ENCODE measurements at regions of chr2 and their contacts with region 1.

Region 1: DNA sequence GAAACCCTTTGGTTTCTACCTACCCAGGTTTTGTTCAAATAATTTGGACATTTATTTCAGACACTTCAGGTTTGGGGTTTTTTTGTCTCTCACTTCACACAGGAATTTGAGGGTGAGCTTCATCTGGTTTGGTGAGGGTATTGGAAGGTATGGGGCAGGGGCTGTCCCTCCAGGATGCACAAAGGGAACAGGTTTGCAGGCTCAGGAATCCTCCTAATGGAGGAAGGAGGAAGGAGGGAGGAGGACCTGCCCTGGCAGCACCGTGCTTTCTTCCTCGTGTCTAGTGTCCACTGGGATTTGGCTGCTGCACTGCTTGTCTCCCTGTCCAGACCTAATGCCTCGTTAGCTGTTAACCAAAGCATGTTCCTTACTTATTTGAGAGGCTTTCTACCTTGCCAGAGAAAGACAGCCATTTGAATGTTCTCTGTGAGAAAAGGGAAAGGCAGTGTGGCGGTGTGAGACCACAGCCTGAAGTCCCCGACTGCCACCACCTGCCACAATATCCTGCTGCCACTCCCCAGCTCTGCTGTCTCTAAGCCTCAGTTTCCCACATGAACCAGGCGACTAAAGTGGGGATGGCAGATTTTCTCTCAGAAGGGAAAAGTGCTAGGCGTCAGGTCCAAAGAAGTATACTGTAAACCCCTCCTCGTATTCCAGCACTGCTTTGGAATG is 2.2 kb upstream of the SLC4A5 start:
- DNase-seq: no peak
- ATAC-seq: 0 out of 2 replicates have a peak, but pooled peaks have one; percentile 48
- H3K4me3 ChIP-seq: no peak overlapping the region
- H3K27ac ChIP-seq: no peak overlapping the region
- H3K4me1 ChIP-seq: no peaks in the 10 kb centered on the region
- H3K27me3 ChIP-seq: no peaks in the 10 kb centered on the region
- CTCF ChIP-seq: no peak

Region 2: GRCh38 chr2:74206180-74206688 is 139.2 kb before region 1 on chr2:
- CTCF ChIA-PET with region 1: no interaction called
- POLR2A ChIA-PET with region 1: no interaction called
- in situ Hi-C with region 1: no loop called
- intact Hi-C with region 1: no loop called
- DNase-seq: no peak
- ATAC-seq: no peak
- H3K4me3 ChIP-seq: no peak overlapping the region
- H3K27ac ChIP-seq: peak overlapping the region; percentile 55
- H3K4me1 ChIP-seq: peaks cover 60% of the 10 kb centered on the region
- H3K27me3 ChIP-seq: no peaks in the 10 kb centered on the region
- CTCF ChIP-seq: no peak

Region 3: GRCh38 chr2:74317701-74318301 is 27.6 kb before region 1 on chr2:
- CTCF ChIA-PET with region 1: no interaction called
- POLR2A ChIA-PET with region 1: no interaction called
- in situ Hi-C with region 1: no loop called
- intact Hi-C with region 1: no loop called
- DNase-seq: no peak
- ATAC-seq: no peak
- H3K4me3 ChIP-seq: no peak overlapping the region
- H3K27ac ChIP-seq: no peak overlapping the region
- H3K4me1 ChIP-seq: no peaks in the 10 kb centered on the region
- H3K27me3 ChIP-seq: no peaks in the 10 kb centered on the region; the same call in none of the 2 replicates
- CTCF ChIP-seq: no peak

Region 4: GRCh38 chr2:74328074-74328473 is 17.3 kb before region 1 on chr2:
- CTCF ChIA-PET with region 1: interaction called, 13 read pairs
- POLR2A ChIA-PET with region 1: no interaction called
- in situ Hi-C with region 1: no loop called
- intact Hi-C with region 1: no loop called
- DNase-seq: no peak
- ATAC-seq: no peak
- H3K4me3 ChIP-seq: no peak overlapping the region
- H3K27ac ChIP-seq: no peak overlapping the region
- H3K4me1 ChIP-seq: no peaks in the 10 kb centered on the region
- H3K27me3 ChIP-seq: no peaks in the 10 kb centered on the region; the same call in 1 of the 2 replicates
- CTCF ChIP-seq: no peak

Region 5: GRCh38 chr2:74482801-74483674 is 137.6 kb after region 1 on chr2 and contains the starts of genes CCDC142 and TTC31:
- CTCF ChIA-PET with region 1: no interaction called
- POLR2A ChIA-PET with region 1: no interaction called
- in situ Hi-C with region 1: no loop called
- intact Hi-C with region 1: no loop called
- DNase-seq: peak; percentile 93
- ATAC-seq: peak; percentile 97
- H3K4me3 ChIP-seq: peak within 1 kb of the TSS; percentile 84 to 99
- H3K27ac ChIP-seq: peak within 1 kb of the TSS; percentile 99
- H3K4me1 ChIP-seq: peaks cover 16% of the 10 kb centered on the region
- H3K27me3 ChIP-seq: no peaks in the 10 kb centered on the region
- CTCF ChIP-seq: peak; percentile 96
- total RNA-seq, gene CCDC142: 24.2 TPM
- total RNA-seq, gene TTC31: 38.7 TPM